Mammary epithelial cell (primary cell): ENCODE measurements at regions of chr3 and their contacts with region 1.

Region 1: GRCh38 chr3:180062771-180063170 is 26.0 kb upstream of the PEX5L start:
- DNase-seq: no peak
- H3K4me3 ChIP-seq: no peak overlapping the region
- H3K27ac ChIP-seq: no peak overlapping the region
- H3K4me1 ChIP-seq: no peaks in the 10 kb centered on the region
- H3K27me3 ChIP-seq: no peaks in the 10 kb centered on the region
- CTCF ChIP-seq: no peak

Region 2: GRCh38 chr3:180048840-180049239 is 13.9 kb before region 1 on chr3:
- CTCF ChIA-PET with region 1: interaction called, 11 read pairs
- dilution Hi-C with region 1: no loop called
- in situ Hi-C with region 1: no loop called
- intact Hi-C with region 1: no loop called
- DNase-seq: peak; percentile 59
- H3K4me3 ChIP-seq: no peak overlapping the region
- H3K27ac ChIP-seq: no peak overlapping the region
- H3K4me1 ChIP-seq: no peaks in the 10 kb centered on the region
- H3K27me3 ChIP-seq: no peaks in the 10 kb centered on the region
- CTCF ChIP-seq: no peak